PC-3 (cell line): ENCODE measurements at regions of chr20 and their contacts with region 1.

Region 1: DNA sequence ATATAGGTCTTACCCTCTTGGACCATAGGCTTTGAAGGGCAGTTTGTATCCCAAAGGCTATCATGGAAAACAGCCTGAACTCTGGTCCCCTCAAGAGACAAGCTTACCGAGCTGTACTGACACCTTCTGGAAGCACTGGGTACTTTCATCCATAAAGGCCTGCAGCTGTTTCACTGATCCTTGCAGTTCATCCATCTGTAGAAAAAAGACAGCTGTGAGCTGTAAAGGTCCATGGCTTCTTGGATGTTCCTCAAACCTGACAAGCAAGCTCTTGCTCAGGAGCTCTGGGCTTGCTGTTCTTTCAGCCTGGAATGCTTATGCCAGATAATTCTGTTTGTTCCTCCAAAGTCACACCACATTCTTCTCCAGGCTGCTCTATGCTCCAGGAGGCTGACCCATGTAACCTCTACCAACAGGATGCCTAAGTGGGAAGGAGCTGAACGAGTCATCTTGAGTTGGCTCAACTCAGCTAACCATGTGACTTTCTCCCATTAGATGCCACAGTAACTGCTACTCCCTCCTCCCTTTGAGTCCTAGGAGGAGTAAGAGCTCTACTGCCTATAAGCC is 8.8 kb upstream of the NDRG3 start:
- DNase-seq: peak; percentile 79
- ATAC-seq: peak; percentile 98
- H3K4me3 ChIP-seq: no peak overlapping the region
- H3K27ac ChIP-seq: no peak overlapping the region
- H3K4me1 ChIP-seq: no peaks in the 10 kb centered on the region
- H3K27me3 ChIP-seq: no peaks in the 10 kb centered on the region
- CTCF ChIP-seq: peak; percentile 87

Region 2: DNA sequence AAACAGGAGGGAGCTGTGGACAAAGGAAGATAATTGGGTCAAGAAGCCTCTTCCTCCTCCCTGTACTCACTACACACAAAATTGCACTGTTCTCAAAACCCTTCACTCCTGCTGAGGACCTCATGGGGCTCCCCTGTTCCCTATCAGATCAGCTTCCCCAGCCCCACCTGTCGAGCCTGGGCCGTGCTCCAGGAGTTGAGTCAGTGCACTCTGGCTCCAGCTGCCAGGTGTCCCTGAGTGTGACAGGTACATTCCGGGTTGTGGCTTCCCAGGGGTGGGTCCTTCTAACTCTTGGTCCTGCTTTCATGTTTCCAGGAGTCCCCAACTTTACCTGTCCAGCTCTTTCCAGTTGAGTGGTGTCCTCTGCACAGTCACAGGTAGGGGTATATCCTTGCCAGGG is 140.8 kb before region 1 on chr20:
- CTCF ChIA-PET with region 1: interaction called, 5 read pairs
- POLR2A ChIA-PET with region 1: no interaction called
- intact Hi-C with region 1: loop called (anchors 1 kb)
- DNase-seq: peak; percentile 71
- ATAC-seq: peak; percentile 77
- H3K4me3 ChIP-seq: no peak overlapping the region
- H3K27ac ChIP-seq: no peak overlapping the region
- H3K4me1 ChIP-seq: peaks cover 12% of the 10 kb centered on the region; the same call in 1 of the 2 replicates
- H3K27me3 ChIP-seq: no peaks in the 10 kb centered on the region
- CTCF ChIP-seq: no peak

Region 3: DNA sequence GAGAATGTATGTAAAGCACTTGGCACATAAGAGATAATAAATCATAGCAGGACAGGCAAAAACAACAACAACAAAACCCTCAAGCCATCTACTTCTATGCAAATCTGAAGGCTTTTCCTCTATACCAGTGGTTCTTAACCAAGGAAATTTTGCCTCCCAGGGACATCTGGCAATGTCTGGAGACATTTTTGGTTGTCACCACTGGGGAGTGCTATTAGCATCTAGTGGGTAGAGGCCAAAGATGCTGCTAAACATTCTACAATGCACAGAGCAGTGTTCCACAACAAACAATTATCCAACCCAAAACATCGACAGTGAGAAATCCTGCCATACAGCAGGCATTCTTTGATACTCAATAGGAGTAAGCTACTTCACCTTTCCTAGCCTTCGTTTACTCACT is 37.1 kb before region 1 on chr20:
- CTCF ChIA-PET with region 1: no interaction called
- POLR2A ChIA-PET with region 1: no interaction called
- intact Hi-C with region 1: loop called (anchors 1 kb)
- DNase-seq: peak; percentile 50
- ATAC-seq: peak; percentile 64
- H3K4me3 ChIP-seq: no peak overlapping the region
- H3K27ac ChIP-seq: no peak overlapping the region
- H3K4me1 ChIP-seq: no peaks in the 10 kb centered on the region
- H3K27me3 ChIP-seq: no peaks in the 10 kb centered on the region
- CTCF ChIP-seq: peak; percentile 65

Region 4: GRCh38 chr20:36728986-36729385 is 25.8 kb before region 1 on chr20:
- CTCF ChIA-PET with region 1: interaction called, 13 read pairs
- POLR2A ChIA-PET with region 1: interaction called, 5 read pairs
- intact Hi-C with region 1: no loop called
- DNase-seq: peak; percentile 55
- ATAC-seq: peak; percentile 25; the same call in 1 of the 2 replicates
- H3K4me3 ChIP-seq: no peak overlapping the region
- H3K27ac ChIP-seq: no peak overlapping the region
- H3K4me1 ChIP-seq: peaks cover 9% of the 10 kb centered on the region
- H3K27me3 ChIP-seq: no peaks in the 10 kb centered on the region
- CTCF ChIP-seq: peak; percentile 57; the same call in 1 of the 2 replicates